ENCODE measurements at regions of chr3 and their contacts with region 1.

Region 1: GRCh38 chr3:141561426-141562034 is 74.7 kb downstream of the RASA2 start:
- DNase-seq: peak; percentile 61
- H3K4me3 Mint-ChIP-seq: no peak overlapping the region
- H3K27ac Mint-ChIP-seq: no peak overlapping the region
- H3K4me1 Mint-ChIP-seq: peaks cover 33% of the 10 kb centered on the region
- H3K27me3 Mint-ChIP-seq: no peaks in the 10 kb centered on the region

Region 2: DNA sequence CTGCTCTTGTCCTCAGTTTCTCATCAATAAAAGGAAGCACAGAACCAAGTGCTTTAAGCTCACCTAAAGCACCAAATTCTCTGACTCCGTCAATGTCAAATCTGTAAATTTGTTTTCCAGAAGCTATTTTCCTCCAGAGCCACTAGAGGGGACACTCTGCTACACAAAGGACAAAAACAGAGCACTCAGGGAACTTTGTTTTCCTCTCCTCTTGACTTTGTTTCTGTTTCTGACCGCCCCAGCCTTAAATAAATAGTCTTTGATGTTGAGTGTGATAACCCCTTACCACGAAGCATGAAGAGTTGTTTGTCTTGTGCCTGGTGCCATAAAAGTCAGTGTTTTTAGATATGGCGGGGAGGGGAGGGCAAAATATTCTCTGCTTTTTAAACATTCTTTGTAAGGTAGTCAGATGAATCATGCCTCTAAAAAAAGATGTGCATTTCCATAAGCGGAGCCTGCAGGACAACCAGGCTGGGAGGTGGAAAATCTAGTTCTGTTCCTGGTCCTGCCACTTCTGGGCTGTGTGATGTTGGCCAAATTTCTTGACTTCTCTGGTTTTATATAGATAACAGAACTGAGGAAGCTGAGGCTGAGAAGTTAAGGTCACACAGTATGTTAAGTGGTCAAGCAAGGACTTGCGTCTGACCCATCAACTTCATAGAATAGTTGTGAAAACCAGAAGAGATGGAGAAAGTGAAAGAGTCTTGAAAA is 200.5 kb before region 1 on chr3:
- CTCF ChIA-PET with region 1: no interaction called
- intact Hi-C with region 1: loop called (anchors 5 kb)
- DNase-seq: no peak
- H3K4me3 Mint-ChIP-seq: no peak overlapping the region
- H3K27ac Mint-ChIP-seq: no peak overlapping the region
- H3K4me1 Mint-ChIP-seq: peaks cover 8% of the 10 kb centered on the region
- H3K27me3 Mint-ChIP-seq: no peaks in the 10 kb centered on the region

Region 3: GRCh38 chr3:141460097-141460704 is 101.3 kb before region 1 on chr3:
- CTCF ChIA-PET with region 1: interaction called, 133 read pairs
- intact Hi-C with region 1: loop called (anchors 1 kb)
- DNase-seq: peak; percentile 96
- H3K4me3 Mint-ChIP-seq: no peak overlapping the region
- H3K27ac Mint-ChIP-seq: no peak overlapping the region
- H3K4me1 Mint-ChIP-seq: peaks cover 6% of the 10 kb centered on the region
- H3K27me3 Mint-ChIP-seq: no peaks in the 10 kb centered on the region

Region 4: GRCh38 chr3:141487521-141488252 is 73.8 kb before region 1 on chr3:
- CTCF ChIA-PET with region 1: interaction called, 21 read pairs
- intact Hi-C with region 1: loop called (anchors 1 kb)
- DNase-seq: peak; percentile 93
- H3K4me3 Mint-ChIP-seq: peak overlapping the region; percentile 87
- H3K27ac Mint-ChIP-seq: peak overlapping the region; percentile 94
- H3K4me1 Mint-ChIP-seq: peaks cover 68% of the 10 kb centered on the region
- H3K27me3 Mint-ChIP-seq: no peaks in the 10 kb centered on the region

Region 5: GRCh38 chr3:141575879-141576743 is 14.6 kb after region 1 on chr3:
- CTCF ChIA-PET with region 1: interaction called, 13 read pairs
- intact Hi-C with region 1: no loop called
- DNase-seq: no peak
- H3K4me3 Mint-ChIP-seq: no peak overlapping the region
- H3K27ac Mint-ChIP-seq: peak overlapping the region; percentile 63
- H3K4me1 Mint-ChIP-seq: peaks cover 14% of the 10 kb centered on the region
- H3K27me3 Mint-ChIP-seq: no peaks in the 10 kb centered on the region

Region 6: DNA sequence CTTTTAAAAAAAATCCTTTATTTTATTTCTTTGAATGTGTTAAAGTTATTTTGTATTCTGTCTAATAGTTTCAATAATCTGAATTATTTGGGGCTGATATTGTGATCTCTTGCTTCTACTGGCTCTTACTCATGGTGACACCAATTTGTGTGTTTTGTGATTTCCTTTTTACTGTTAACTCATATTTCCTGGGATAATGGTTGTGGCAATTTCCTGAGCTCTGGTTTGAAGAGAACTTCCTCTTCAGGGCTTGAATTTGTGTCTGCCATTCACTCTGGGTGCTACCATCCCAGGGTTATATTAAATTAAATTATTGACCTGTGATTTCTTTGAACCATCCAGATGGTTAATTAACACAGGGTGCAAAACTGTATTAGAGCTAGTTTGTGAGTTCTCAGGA is 116.2 kb after region 1 on chr3:
- CTCF ChIA-PET with region 1: no interaction called
- intact Hi-C with region 1: no loop called
- DNase-seq: no peak
- H3K4me3 Mint-ChIP-seq: no peak overlapping the region
- H3K27ac Mint-ChIP-seq: no peak overlapping the region
- H3K4me1 Mint-ChIP-seq: peaks cover 7% of the 10 kb centered on the region
- H3K27me3 Mint-ChIP-seq: peaks cover 2% of the 10 kb centered on the region

Region 7: DNA sequence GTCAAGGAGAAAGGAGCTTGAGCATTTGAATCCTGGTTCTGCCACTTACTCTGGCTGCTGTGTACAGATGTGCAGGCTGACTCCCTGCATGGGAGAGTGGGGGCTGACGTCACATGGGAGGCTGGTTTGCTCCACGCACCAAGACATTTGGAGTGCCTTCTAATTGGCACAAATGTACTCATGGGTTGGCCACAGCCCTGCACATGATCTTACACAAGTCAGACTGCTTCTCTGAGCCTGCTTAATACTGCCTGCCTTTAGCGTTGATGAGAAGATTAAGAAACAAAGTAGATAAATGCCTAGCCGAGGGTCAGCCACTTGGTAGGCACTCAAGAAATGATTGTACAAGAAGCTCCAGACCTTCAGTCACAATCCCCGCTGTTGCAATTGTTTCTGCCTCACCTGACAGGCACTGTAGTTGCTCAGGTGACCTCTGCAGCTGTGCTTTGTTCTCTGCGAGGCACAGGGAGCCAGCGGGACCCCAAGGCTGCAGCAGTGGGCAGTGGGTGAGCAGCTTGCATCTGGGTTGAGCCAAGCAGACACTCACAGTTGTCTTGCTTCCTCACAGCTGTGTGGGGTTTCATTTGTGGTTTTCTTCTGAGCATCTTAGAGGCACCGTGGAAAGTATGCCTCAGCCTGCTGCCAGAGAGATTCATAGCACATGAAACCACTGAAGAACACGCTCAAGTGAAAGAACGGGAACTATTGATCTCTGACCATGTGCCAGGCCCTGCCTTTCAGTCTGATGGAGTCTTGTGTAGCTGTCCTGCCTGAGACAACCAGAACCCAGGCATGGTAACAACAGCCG is 234.8 kb after region 1 on chr3:
- CTCF ChIA-PET with region 1: no interaction called
- intact Hi-C with region 1: loop called (anchors 5 kb)
- DNase-seq: peak; percentile 90
- H3K4me3 Mint-ChIP-seq: peak overlapping the region; percentile 74
- H3K27ac Mint-ChIP-seq: peak overlapping the region; percentile 89
- H3K4me1 Mint-ChIP-seq: peaks cover 46% of the 10 kb centered on the region
- H3K27me3 Mint-ChIP-seq: no peaks in the 10 kb centered on the region

Region 8: DNA sequence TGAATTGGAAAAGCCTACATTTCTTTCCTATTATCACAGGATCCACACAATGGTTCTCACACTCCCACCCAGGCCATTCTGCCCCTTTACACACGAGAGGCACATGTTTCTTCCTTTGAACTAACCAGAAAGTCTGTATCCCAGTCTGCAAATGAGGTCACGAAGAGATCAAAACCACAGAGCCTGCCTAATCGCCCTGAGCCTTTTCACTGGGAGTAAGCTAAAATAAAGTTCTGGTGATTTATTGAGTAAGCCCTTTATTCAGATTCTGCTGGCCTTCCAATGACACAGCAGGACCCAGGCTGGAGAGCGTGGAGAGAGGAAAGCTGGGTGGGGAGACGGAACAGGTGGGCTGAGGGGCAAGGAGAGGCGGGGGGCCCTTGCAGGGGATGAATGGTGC is 393.6 kb after region 1 on chr3:
- CTCF ChIA-PET with region 1: no interaction called
- intact Hi-C with region 1: no loop called
- DNase-seq: no peak
- H3K4me3 Mint-ChIP-seq: no peak overlapping the region
- H3K27ac Mint-ChIP-seq: no peak overlapping the region
- H3K4me1 Mint-ChIP-seq: peaks cover 4% of the 10 kb centered on the region
- H3K27me3 Mint-ChIP-seq: no peaks in the 10 kb centered on the region